Panc1 (cell line): ENCODE measurements at regions of chr17 and their contacts with region 1.

Region 1: GRCh38 chr17:29461483-29462206 is 71.5 kb downstream of the TAOK1 start:
- DNase-seq: no peak
- ATAC-seq: no peak
- H3K4me3 ChIP-seq: no peak overlapping the region
- H3K27ac ChIP-seq: no peak overlapping the region
- H3K4me1 ChIP-seq: no peaks in the 10 kb centered on the region
- H3K27me3 ChIP-seq: no peaks in the 10 kb centered on the region
- CTCF ChIP-seq: no peak

Region 2: DNA sequence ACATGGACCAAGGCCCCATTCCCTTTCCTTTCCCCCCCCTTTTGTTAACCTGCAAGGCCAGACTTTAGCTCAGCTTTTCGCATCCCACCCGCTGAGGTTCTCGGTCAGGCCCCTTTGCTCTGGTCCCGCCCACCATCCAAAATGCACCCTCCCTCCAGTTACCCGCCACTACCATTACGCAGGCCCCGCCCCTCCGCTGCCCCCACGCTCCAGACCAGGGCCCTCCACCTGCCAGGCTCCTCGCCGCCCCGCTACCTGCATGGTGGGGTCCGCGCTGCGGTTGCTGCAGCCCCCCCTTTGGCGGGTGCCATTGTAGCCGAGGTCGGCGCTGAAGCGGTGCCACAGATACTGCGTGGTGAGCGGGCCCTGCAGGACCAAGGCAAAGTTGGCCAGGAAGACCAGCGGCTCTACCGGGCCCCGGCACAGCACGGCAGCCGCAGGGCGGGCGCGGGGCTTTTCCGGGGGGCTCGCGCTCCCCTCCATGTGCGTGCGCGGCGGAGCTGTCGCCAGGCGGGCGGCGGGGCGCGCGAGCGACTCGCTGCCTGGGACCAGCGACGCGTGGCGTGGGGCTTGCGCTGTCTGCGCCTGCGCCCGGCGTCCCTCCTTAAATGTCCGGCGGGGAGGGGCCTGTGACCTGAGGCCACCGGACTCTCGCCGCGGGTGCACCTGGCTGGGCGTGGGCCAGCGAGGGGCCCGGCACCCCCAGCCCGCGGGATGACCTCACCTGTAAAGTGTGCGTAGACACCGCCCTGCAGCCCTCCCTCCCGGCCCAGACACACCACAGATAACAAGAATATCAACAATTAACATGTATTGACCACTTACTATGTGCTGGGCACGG is 1055.8 kb before region 1 on chr17 and contains the start of gene SLC46A1:
- CTCF ChIA-PET with region 1: no interaction called
- POLR2A ChIA-PET with region 1: no interaction called
- in situ Hi-C with region 1: no loop called
- intact Hi-C with region 1: no loop called
- DNase-seq: no peak
- ATAC-seq: peak; percentile 92
- H3K4me3 ChIP-seq: peak within 1 kb of the TSS; percentile 59 to 73
- H3K27ac ChIP-seq: peak within 1 kb of the TSS; percentile 64
- H3K4me1 ChIP-seq: peaks cover 8% of the 10 kb centered on the region
- H3K27me3 ChIP-seq: no peaks in the 10 kb centered on the region
- CTCF ChIP-seq: no peak
- total RNA-seq, gene SLC46A1: 16.9 TPM

Region 3: GRCh38 chr17:29722411-29723198 is 261.0 kb after region 1 on chr17:
- CTCF ChIA-PET with region 1: no interaction called
- POLR2A ChIA-PET with region 1: no interaction called
- in situ Hi-C with region 1: no loop called
- intact Hi-C with region 1: no loop called
- DNase-seq: no peak
- ATAC-seq: no peak
- H3K4me3 ChIP-seq: no peak overlapping the region
- H3K27ac ChIP-seq: no peak overlapping the region
- H3K4me1 ChIP-seq: no peaks in the 10 kb centered on the region
- H3K27me3 ChIP-seq: no peaks in the 10 kb centered on the region
- CTCF ChIP-seq: no peak

Region 4: DNA sequence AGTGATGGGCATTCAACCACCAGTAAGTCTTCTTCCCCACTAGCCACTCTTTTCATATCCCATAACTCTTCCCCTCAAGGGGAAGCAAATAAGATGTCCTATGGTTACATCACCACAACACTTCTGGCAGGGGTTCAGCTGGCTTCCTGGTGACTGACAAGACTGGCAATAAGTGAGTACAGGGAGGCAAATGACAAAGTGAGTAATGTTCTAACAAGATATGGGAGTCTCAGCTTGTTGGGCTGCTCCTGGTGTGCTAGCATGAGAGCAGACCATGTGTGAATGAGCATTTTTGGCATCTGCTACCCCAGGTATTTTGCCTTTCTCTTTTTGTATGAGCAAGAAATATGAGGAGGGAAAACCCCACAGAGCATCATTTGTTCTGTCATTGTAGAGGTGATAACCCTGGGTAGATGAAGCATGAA is 862.3 kb after region 1 on chr17:
- CTCF ChIA-PET with region 1: no interaction called
- POLR2A ChIA-PET with region 1: interaction called, 14 read pairs
- in situ Hi-C with region 1: no loop called
- intact Hi-C with region 1: no loop called
- DNase-seq: no peak
- ATAC-seq: no peak
- H3K4me3 ChIP-seq: no peak overlapping the region
- H3K27ac ChIP-seq: no peak overlapping the region
- H3K4me1 ChIP-seq: no peaks in the 10 kb centered on the region
- H3K27me3 ChIP-seq: peaks cover 11% of the 10 kb centered on the region; the same call in 1 of the 2 replicates
- CTCF ChIP-seq: no peak